ENCODE measurements at regions of chr4 and their contacts with region 1.

Region 1: GRCh38 chr4:56513517-56513916 is 7.9 kb downstream of the ARL9 start:
- DNase-seq: no peak
- ATAC-seq: no peak

Region 2: GRCh38 chr4:54754394-54754793 is 1759.1 kb before region 1 on chr4:
- intact Hi-C with region 1: no loop called
- DNase-seq: no peak
- ATAC-seq: no peak

Region 3: GRCh38 chr4:56550642-56551041 is 37.1 kb after region 1 on chr4:
- intact Hi-C with region 1: loop called (anchors 1 kb)
- DNase-seq: no peak
- ATAC-seq: no peak

Measured in sciatic nerve (tissue), 2 donors.